Ascending aorta (tissue), 2 donors: ENCODE measurements at regions of chr10 and their contacts with region 1.

Region 1: GRCh38 chr10:102151774-102152544 is at the start of gene NOLC1:
- DNase-seq: peak; percentile 98 to 100
- H3K4me3 ChIP-seq: peak within 1 kb of the TSS; percentile 65 to 73
- H3K27ac ChIP-seq: peak within 1 kb of the TSS; percentile 86 to 93
- H3K4me1 ChIP-seq: peaks cover 8 to 16% of the 10 kb centered on the region in 2 donors
- H3K27me3 ChIP-seq: no peaks in the 10 kb centered on the region
- CTCF ChIP-seq: no peak
- total RNA-seq, gene NOLC1: 33.3 TPM

Region 2: GRCh38 chr10:102114861-102115618 is 36.9 kb before region 1 on chr10:
- intact Hi-C with region 1: loop called (anchors 5 kb)
- DNase-seq: peak; percentile 76 to 93
- H3K4me3 ChIP-seq: peak overlapping the region; percentile 69 to 84
- H3K27ac ChIP-seq: peak overlapping the region; percentile 71 to 100
- H3K4me1 ChIP-seq: peaks cover 33 to 53% of the 10 kb centered on the region in 2 donors
- H3K27me3 ChIP-seq: no peaks in the 10 kb centered on the region
- CTCF ChIP-seq: no peak

Region 3: DNA sequence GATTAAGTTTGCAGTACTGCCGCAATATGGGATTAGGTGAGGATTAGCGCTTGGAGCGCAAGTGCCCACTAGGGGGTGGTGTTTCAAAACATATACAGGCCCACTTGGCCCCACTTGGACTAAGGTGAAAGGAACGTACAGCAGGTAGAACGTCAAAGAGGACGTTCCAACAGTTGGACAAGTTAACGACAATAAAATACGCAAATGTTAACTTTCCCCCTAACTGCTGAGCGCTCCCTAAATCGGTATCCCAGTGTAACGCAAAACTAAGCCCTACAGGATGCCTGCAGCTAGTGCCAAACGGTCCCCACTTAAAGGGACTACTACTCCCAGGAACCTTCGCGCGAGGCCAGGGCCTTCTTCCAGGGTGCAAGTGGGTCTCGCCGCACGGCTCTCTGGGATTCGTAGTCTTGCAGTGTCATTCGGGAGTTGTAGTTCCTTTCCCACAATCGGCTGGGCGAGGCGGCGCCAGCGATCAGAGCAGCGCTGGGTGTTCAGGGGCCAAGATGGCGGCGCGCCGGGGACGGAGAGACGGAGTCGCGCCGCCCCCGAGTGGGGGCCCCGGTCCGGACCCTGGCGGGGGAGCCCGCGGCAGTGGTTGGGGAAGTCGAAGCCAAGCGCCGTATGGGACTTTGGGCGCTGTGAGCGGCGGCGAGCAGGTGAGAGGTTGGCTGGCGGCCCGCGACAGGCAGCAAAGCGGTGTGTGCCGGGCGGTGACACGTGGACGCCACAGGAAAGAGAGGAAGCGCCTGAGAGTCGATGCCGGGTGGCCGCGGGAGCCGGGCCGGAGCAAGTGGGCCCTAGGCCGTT is 19.2 kb before region 1 on chr10 and contains the start of gene PPRC1:
- intact Hi-C with region 1: loop called (anchors 1 kb)
- DNase-seq: peak; percentile 97 to 100
- H3K4me3 ChIP-seq: peak within 1 kb of the TSS; percentile 76 to 81
- H3K27ac ChIP-seq: peak within 1 kb of the TSS; percentile 93 to 97
- H3K4me1 ChIP-seq: peaks cover 5 to 17% of the 10 kb centered on the region in 2 donors
- H3K27me3 ChIP-seq: no peaks in the 10 kb centered on the region
- CTCF ChIP-seq: peak; percentile 82 to 93 (median 86)
- total RNA-seq, gene PPRC1: 30.7 TPM

Region 4: GRCh38 chr10:102245101-102245931 is 93.4 kb after region 1 on chr10 and contains the start of gene GBF1:
- intact Hi-C with region 1: loop called (anchors 1 kb)
- DNase-seq: peak; percentile 89 to 97
- H3K4me3 ChIP-seq: peak within 1 kb of the TSS; percentile 66 to 92
- H3K27ac ChIP-seq: peak within 1 kb of the TSS; percentile 85 to 90
- H3K4me1 ChIP-seq: peaks cover 13 to 30% of the 10 kb centered on the region in 2 donors
- H3K27me3 ChIP-seq: no peaks in the 10 kb centered on the region
- CTCF ChIP-seq: no peak
- total RNA-seq, gene GBF1: 56.0 TPM

Region 5: GRCh38 chr10:102394079-102394800 is 242.3 kb after region 1 on chr10:
- intact Hi-C with region 1: loop called (anchors 1 kb)
- DNase-seq: peak; percentile 82 to 97
- H3K4me3 ChIP-seq: peak overlapping the region; percentile 65 to 85
- H3K27ac ChIP-seq: peak overlapping the region; percentile 89 to 97
- H3K4me1 ChIP-seq: peaks cover 8 to 23% of the 10 kb centered on the region in 2 donors
- H3K27me3 ChIP-seq: no peaks in the 10 kb centered on the region
- CTCF ChIP-seq: peak in 2 of 3 experiments; percentile 94 to 99

Region 6: GRCh38 chr10:102420810-102421644 is 269.1 kb after region 1 on chr10 and contains the start of gene FBXL15:
- intact Hi-C with region 1: loop called (anchors 1 kb)
- DNase-seq: peak; percentile 85 to 99
- H3K4me3 ChIP-seq: peak within 1 kb of the TSS; percentile 92 to 93
- H3K27ac ChIP-seq: peak within 1 kb of the TSS; percentile 85 to 86
- H3K4me1 ChIP-seq: peaks cover 16 to 27% of the 10 kb centered on the region in 2 donors
- H3K27me3 ChIP-seq: peaks cover 13% of the 10 kb centered on the region
- CTCF ChIP-seq: no peak
- total RNA-seq, gene FBXL15: 16.5 TPM

Region 7: DNA sequence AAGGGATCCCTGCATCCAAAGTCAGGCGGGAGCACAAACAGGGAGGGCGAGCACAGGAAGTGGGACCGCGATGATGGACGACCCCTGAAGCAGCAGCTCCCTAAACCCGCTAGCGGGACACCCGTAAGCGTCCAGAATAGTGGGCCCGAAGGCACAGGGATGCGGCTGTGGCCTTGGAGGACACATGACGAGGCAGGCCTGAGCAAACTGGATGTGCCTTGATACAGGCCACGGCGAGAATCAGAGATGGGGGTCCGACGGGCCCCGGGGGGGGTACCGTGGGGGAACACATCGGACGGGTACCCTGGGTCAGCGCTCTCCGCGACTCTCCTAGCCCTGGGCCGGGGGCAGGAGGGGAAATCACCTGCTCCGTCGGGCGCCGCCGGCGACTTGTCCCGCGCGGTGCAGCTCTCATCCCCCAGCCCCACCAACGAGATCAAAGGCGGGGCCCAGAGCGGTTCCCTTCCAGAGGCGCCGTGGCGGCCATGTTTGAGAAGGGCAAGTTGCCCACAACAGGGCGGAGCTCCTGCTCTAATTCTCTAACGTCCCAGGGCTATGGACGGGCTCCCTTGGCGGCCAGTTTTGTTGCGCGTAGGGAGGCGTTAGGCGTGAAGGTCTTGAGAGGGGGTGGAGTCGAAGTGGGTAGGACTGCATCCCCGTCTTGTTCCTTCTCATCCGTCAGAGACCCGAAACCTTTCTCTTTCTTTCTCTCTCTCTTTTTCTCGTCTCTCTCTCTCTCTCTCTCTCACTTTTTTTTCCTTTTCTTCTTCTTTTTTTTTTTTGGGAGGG is 280.4 kb after region 1 on chr10 and contains the start of gene CUEDC2:
- intact Hi-C with region 1: loop called (anchors 1 kb)
- DNase-seq: peak; percentile 84 to 98
- H3K4me3 ChIP-seq: peak within 1 kb of the TSS; percentile 92 to 98
- H3K27ac ChIP-seq: peak within 1 kb of the TSS; percentile 79
- H3K4me1 ChIP-seq: peaks cover 8 to 14% of the 10 kb centered on the region in 2 donors
- H3K27me3 ChIP-seq: no peaks in the 10 kb centered on the region
- CTCF ChIP-seq: no peak
- total RNA-seq, gene CUEDC2: 45.1 TPM